ENCODE measurements at regions of chr11 and their contacts with region 1.

Region 1: GRCh38 chr11:47932544-47932943 is 47.8 kb upstream of the PTPRJ start:
- DNase-seq: no peak
- H3K4me3 ChIP-seq: no peak overlapping the region
- H3K4me3 Mint-ChIP-seq: no peak overlapping the region
- H3K27ac ChIP-seq: no peak overlapping the region
- H3K27ac Mint-ChIP-seq: no peak overlapping the region
- H3K4me1 ChIP-seq: peaks cover 10% of the 10 kb centered on the region
- H3K4me1 Mint-ChIP-seq: peaks cover 8 to 20% (median 15%) of the 10 kb centered on the region in 4 donors
- H3K27me3 ChIP-seq: no peaks in the 10 kb centered on the region
- H3K27me3 Mint-ChIP-seq: no peaks in the 10 kb centered on the region

Region 2: GRCh38 chr11:47788181-47788580 is 144.4 kb before region 1 on chr11:
- CTCF ChIA-PET with region 1: no interaction called
- POLR2A ChIA-PET with region 1: no interaction called
- intact Hi-C with region 1: no loop called
- DNase-seq: no peak
- H3K4me3 ChIP-seq: no peak overlapping the region
- H3K4me3 Mint-ChIP-seq: no peak overlapping the region
- H3K27ac ChIP-seq: no peak overlapping the region
- H3K27ac Mint-ChIP-seq: peak overlapping the region in 1 of 7 donors; percentile 25
- H3K4me1 ChIP-seq: no peaks in the 10 kb centered on the region
- H3K4me1 Mint-ChIP-seq: no peaks in the 10 kb centered on the region
- H3K27me3 ChIP-seq: no peaks in the 10 kb centered on the region
- H3K27me3 Mint-ChIP-seq: no peaks in the 10 kb centered on the region

Region 3: GRCh38 chr11:47917643-47918369 is 14.7 kb before region 1 on chr11:
- CTCF ChIA-PET with region 1: interaction called, 77 read pairs
- POLR2A ChIA-PET with region 1: interaction called, 6 read pairs
- intact Hi-C with region 1: no loop called
- DNase-seq: peak in 1 of 5 donors; percentile 7
- H3K4me3 ChIP-seq: no peak overlapping the region
- H3K4me3 Mint-ChIP-seq: no peak overlapping the region
- H3K27ac ChIP-seq: no peak overlapping the region
- H3K27ac Mint-ChIP-seq: peak overlapping the region; percentile 71 to 99 (median 85)
- H3K4me1 ChIP-seq: peaks cover 69% of the 10 kb centered on the region
- H3K4me1 Mint-ChIP-seq: peaks cover 54 to 90% (median 68%) of the 10 kb centered on the region in 4 donors
- H3K27me3 ChIP-seq: no peaks in the 10 kb centered on the region
- H3K27me3 Mint-ChIP-seq: no peaks in the 10 kb centered on the region

Region 4: GRCh38 chr11:47961383-47961782 is 28.8 kb after region 1 on chr11:
- CTCF ChIA-PET with region 1: interaction called, 25 read pairs
- POLR2A ChIA-PET with region 1: no interaction called
- intact Hi-C with region 1: no loop called
- DNase-seq: no peak
- H3K4me3 ChIP-seq: no peak overlapping the region
- H3K4me3 Mint-ChIP-seq: no peak overlapping the region
- H3K27ac ChIP-seq: no peak overlapping the region
- H3K27ac Mint-ChIP-seq: no peak overlapping the region
- H3K4me1 ChIP-seq: no peaks in the 10 kb centered on the region
- H3K4me1 Mint-ChIP-seq: no peaks in the 10 kb centered on the region
- H3K27me3 ChIP-seq: no peaks in the 10 kb centered on the region
- H3K27me3 Mint-ChIP-seq: no peaks in the 10 kb centered on the region

Region 5: GRCh38 chr11:48020092-48020755 is 87.7 kb after region 1 on chr11:
- CTCF ChIA-PET with region 1: interaction called, 45 read pairs
- POLR2A ChIA-PET with region 1: interaction called, 13 read pairs
- intact Hi-C with region 1: loop called (anchors 1 kb)
- DNase-seq: peak; percentile 58 to 74 (median 59)
- H3K4me3 ChIP-seq: peak overlapping the region in 1 of 2 donors; percentile 17
- H3K4me3 Mint-ChIP-seq: peak overlapping the region; percentile 21 to 85 (median 70)
- H3K27ac ChIP-seq: peak overlapping the region; percentile 59
- H3K27ac Mint-ChIP-seq: peak overlapping the region; percentile 75 to 93 (median 84)
- H3K4me1 ChIP-seq: peaks cover 62% of the 10 kb centered on the region
- H3K4me1 Mint-ChIP-seq: peaks cover 54 to 77% (median 65%) of the 10 kb centered on the region in 4 donors
- H3K27me3 ChIP-seq: no peaks in the 10 kb centered on the region
- H3K27me3 Mint-ChIP-seq: no peaks in the 10 kb centered on the region

Measured in CD4-positive, alpha-beta memory T cell (primary cell).